Sigmoid colon (tissue), 7 donors: ENCODE measurements at regions of chr19 and their contacts with region 1.

Region 1: GRCh38 chr19:7293795-7294570 is at the start of gene INSR:
- DNase-seq: peak; percentile 95
- H3K4me3 ChIP-seq: peak within 1 kb of the TSS; percentile 77 to 98 (median 90)
- H3K27ac ChIP-seq: peak within 1 kb of the TSS; percentile 89 to 94 (median 94)
- H3K4me1 ChIP-seq: peaks cover 0 to 40% (median 28%) of the 10 kb centered on the region in 4 donors
- H3K27me3 ChIP-seq: no peaks in the 10 kb centered on the region
- CTCF ChIP-seq: no peak
- EP300 ChIP-seq: no peak
- POLR2A ChIP-seq: peak in 1 of 2 donors; percentile 24
- total RNA-seq, gene INSR: 67.1 to 83.1 (median 80.6) TPM

Region 2: GRCh38 chr19:7104747-7105447 is 189.1 kb before region 1 on chr19:
- intact Hi-C with region 1: loop called (anchors 5 kb)
- DNase-seq: no peak
- H3K4me3 ChIP-seq: no peak overlapping the region
- H3K27ac ChIP-seq: no peak overlapping the region
- H3K4me1 ChIP-seq: peaks cover 0 to 9% (median 8%) of the 10 kb centered on the region in 4 donors
- H3K27me3 ChIP-seq: no peaks in the 10 kb centered on the region
- CTCF ChIP-seq: no peak
- EP300 ChIP-seq: no peak
- POLR2A ChIP-seq: no peak

Region 3: DNA sequence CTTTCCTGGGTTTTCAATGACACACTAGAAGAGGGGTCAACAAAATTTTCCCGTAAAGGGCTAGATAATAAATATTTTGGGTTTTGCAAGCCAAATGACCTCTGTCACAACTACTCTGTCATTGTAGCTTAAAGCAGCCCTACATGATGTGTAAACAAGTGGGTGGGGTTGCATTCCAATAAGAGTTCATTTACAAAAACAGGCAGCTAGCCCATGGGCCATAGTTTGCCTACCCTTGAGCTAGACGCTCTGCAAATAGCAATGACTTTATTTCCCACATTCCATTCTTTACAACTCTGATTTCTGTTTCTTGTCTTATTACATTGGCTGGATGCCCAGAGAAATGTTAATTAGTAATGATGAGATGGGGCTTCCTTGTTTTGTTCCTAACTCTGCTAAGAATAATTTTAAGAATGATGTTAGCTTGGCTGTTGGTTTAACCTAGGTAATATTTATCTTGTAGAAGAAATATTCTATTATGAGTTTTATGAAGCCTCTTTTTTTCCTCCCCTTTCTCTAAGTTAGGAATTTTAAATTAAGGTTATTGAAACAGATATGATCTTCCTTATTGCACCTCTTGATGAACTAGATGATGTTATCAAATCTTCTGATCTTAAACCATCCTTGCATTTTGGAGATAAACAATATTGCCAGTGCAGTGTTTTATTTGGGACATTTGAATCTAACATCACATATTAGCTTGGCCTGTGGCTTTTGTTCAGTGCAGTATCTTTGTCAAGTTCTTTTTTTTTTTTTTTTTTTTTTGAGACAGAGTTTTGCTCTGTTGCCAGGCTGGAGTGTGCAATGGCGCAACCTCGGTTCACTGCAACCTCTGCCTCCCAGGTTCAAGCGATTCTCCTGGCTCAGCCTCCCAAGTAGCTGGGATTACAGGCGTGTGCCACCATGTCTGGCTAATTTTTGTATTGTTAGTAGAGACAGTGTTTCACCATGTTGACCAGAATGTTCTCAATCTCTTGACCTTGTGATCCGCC is 148.2 kb before region 1 on chr19:
- intact Hi-C with region 1: loop called (anchors 2 kb)
- DNase-seq: peak; percentile 26
- H3K4me3 ChIP-seq: no peak overlapping the region
- H3K27ac ChIP-seq: no peak overlapping the region
- H3K4me1 ChIP-seq: no peaks in the 10 kb centered on the region
- H3K27me3 ChIP-seq: no peaks in the 10 kb centered on the region
- CTCF ChIP-seq: no peak
- EP300 ChIP-seq: no peak
- POLR2A ChIP-seq: no peak

Region 4: GRCh38 chr19:7159105-7159933 is 134.7 kb before region 1 on chr19:
- intact Hi-C with region 1: loop called (anchors 2 kb)
- DNase-seq: peak; percentile 96
- H3K4me3 ChIP-seq: no peak overlapping the region
- H3K27ac ChIP-seq: peak overlapping the region; percentile 76 to 89 (median 82)
- H3K4me1 ChIP-seq: peaks cover 0 to 28% (median 16%) of the 10 kb centered on the region in 4 donors
- H3K27me3 ChIP-seq: no peaks in the 10 kb centered on the region
- CTCF ChIP-seq: no peak
- EP300 ChIP-seq: peak in 3 of 4 donors; percentile 3 to 94 (median 56)
- POLR2A ChIP-seq: no peak

Region 5: GRCh38 chr19:7197760-7198696 is 96.0 kb before region 1 on chr19:
- intact Hi-C with region 1: loop called (anchors 1 kb)
- DNase-seq: peak; percentile 97
- H3K4me3 ChIP-seq: peak overlapping the region; percentile 52 to 75 (median 66)
- H3K27ac ChIP-seq: peak overlapping the region; percentile 85 to 92 (median 88)
- H3K4me1 ChIP-seq: peaks cover 0 to 30% (median 22%) of the 10 kb centered on the region in 4 donors
- H3K27me3 ChIP-seq: no peaks in the 10 kb centered on the region
- CTCF ChIP-seq: peak in 3 of 4 experiments; percentile 26 to 58 (median 30)
- EP300 ChIP-seq: no peak
- POLR2A ChIP-seq: peak; percentile 14 to 41

Region 6: GRCh38 chr19:7211204-7211951 is 82.6 kb before region 1 on chr19:
- intact Hi-C with region 1: no loop called
- DNase-seq: no peak
- H3K4me3 ChIP-seq: no peak overlapping the region
- H3K27ac ChIP-seq: peak overlapping the region in 3 of 4 donors; percentile 43 to 64 (median 46)
- H3K4me1 ChIP-seq: peaks cover 0 to 39% (median 26%) of the 10 kb centered on the region in 4 donors
- H3K27me3 ChIP-seq: no peaks in the 10 kb centered on the region
- CTCF ChIP-seq: no peak
- EP300 ChIP-seq: no peak
- POLR2A ChIP-seq: no peak

Region 7: GRCh38 chr19:7312816-7313215 is 18.8 kb after region 1 on chr19:
- intact Hi-C with region 1: no loop called
- DNase-seq: no peak
- H3K4me3 ChIP-seq: no peak overlapping the region
- H3K27ac ChIP-seq: no peak overlapping the region
- H3K4me1 ChIP-seq: no peaks in the 10 kb centered on the region
- H3K27me3 ChIP-seq: no peaks in the 10 kb centered on the region
- CTCF ChIP-seq: no peak
- EP300 ChIP-seq: no peak
- POLR2A ChIP-seq: no peak

Region 8: DNA sequence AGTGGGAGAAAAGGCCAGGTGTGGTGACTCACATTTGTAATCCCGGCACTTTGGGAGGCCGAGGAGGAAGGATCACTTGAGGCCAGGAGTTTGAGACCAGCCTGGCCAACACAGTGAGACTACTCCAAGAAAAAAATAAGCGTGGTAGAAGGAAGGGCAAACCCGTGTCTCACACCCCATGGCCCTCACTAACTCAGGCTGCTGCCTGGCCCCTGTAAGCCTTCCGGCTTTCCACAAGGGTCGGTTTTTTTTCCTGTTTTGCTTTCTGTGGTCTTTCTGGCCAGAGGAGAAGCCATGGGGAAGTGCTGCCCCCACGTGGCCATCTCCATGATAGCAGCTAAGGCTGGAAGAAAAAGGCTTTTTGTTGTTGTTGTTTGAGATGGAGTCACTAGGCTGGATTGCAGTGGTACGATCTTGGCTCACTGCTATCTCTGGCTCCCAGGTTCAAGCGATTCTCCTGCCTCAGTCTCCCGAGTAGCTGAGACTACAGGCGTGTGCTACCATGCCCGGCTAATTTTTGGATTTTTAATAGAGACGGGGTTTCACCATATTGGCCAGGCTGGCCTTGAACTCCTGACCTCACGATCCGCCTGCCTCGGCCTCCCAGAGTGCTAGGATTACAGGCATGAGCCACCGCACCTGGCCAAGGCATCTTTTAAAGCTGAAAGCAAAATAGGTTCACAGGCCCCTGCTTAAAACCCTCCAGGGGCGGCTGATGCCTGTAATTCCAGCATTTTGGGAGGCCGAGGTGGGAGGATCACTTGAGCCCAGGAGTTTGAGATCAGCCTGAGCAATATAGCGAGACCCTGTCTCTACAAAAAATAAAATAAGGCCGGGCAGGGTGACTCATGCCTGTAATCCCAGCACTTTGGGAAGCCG is 47.2 kb after region 1 on chr19:
- intact Hi-C with region 1: loop called (anchors 5 kb)
- DNase-seq: peak; percentile 89
- H3K4me3 ChIP-seq: no peak overlapping the region
- H3K27ac ChIP-seq: no peak overlapping the region
- H3K4me1 ChIP-seq: peaks cover 0 to 8% (median 0%) of the 10 kb centered on the region in 4 donors
- H3K27me3 ChIP-seq: no peaks in the 10 kb centered on the region
- CTCF ChIP-seq: peak; percentile 91 to 94 (median 94)
- EP300 ChIP-seq: no peak
- POLR2A ChIP-seq: no peak

Region 9: DNA sequence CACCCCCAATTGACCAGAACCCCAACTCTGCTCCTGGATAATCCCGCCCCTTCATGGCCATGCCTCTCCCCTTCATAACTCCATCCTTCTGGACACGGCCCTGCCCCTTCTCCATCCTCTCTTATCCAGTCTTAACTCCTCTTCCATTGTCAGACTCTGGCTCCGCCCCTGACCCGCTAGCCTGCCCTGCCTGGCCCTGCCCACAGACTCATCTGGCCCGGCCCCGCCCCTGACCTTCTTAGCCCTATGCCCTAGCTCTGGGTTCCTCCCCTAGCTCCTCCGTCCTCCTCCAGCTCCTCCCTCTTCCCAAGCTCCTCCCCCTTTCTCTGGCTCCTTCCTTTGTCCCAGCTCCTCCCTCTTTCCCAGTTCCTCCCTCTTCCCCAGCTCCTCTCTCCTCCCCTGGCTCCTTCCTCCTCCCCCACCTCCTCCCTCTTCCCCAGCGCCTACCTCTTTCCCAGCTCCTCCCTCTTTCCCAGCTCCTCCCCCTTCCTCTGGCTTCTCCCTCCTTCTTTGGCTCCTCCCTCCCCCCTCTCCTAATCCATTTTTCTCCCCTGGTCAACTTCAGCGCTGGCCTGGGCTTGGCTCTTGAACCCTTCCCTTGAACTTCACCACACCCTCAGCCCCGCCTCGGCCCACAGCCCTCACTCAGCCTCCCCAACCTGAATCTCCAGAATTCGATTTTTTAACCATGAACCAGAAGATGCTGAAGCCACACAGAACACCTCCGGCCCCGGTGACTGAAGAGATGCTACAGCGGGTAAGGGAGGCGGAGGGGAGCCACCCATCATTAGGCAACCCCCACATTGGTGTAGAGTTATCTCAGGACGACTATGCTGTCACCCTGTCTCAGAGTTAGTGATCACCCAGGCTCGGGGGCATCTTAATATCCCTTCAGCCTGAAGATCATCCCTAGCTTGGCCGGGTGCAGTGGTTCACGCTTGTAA is 212.7 kb after region 1 on chr19:
- intact Hi-C with region 1: no loop called
- DNase-seq: peak; percentile 82
- H3K4me3 ChIP-seq: no peak overlapping the region
- H3K27ac ChIP-seq: no peak overlapping the region
- H3K4me1 ChIP-seq: peaks cover 0 to 20% (median 14%) of the 10 kb centered on the region in 4 donors
- H3K27me3 ChIP-seq: peaks cover 2 to 44% (median 23%) of the 10 kb centered on the region in 3 donors
- CTCF ChIP-seq: no peak
- EP300 ChIP-seq: no peak
- POLR2A ChIP-seq: no peak